T-cell (primary cell): ENCODE measurements at regions of chr9 and their contacts with region 1.

Region 1: GRCh38 chr9:21559424-21560280 is 77.5 kb upstream of the IFNE start:
- DNase-seq: peak; percentile 8 to 66 (median 39)
- ATAC-seq: peak; percentile 81 to 88 (median 84)
- H3K4me3 ChIP-seq: peak overlapping the region; percentile 66 to 90
- H3K4me3 Mint-ChIP-seq: peak overlapping the region; percentile 93 to 97 (median 93)
- H3K27ac ChIP-seq: no peak overlapping the region
- H3K27ac Mint-ChIP-seq: no peak overlapping the region
- H3K4me1 ChIP-seq: peaks cover 4 to 18% of the 10 kb centered on the region in 2 experiments
- H3K4me1 Mint-ChIP-seq: peaks cover 27 to 37% (median 27%) of the 10 kb centered on the region in 3 donors
- H3K27me3 ChIP-seq: peaks cover 16 to 23% of the 10 kb centered on the region in 2 experiments
- H3K27me3 Mint-ChIP-seq: peaks cover 12 to 46% of the 10 kb centered on the region in 2 donors

Region 2: DNA sequence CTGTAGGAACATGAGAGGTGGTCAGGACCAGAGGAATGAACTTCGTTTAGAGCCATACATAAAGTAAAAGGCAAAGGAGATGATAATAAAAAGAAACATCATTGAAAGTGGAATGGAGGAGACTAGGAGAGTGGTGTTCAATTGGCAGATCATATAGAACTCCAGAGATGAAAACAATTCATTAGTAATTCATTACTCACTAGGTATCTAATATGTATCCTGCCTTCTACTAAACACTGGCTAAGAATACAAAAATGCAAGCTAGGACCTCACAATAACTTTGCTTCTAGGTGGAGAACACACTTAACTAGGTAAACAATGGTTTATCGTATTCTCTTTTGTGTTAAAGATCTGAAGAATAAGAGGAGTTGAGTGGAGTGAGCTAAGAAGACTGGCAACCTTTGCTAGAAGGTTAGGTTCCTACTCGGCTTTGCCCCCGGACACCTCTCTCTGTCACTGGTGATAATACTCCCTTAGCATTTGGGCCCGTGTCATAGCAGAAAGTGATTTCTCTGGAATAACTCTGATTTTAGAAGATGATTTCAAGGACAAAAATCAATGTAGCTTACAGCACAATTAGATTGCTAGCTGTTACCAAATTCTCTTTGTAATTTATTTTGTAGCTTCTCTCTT is 11.1 kb after region 1 on chr9:
- CTCF ChIA-PET with region 1: interaction called in 1 of 2 experiments, 5 read pairs
- POLR2A ChIA-PET with region 1: interaction called, 4 to 12 read pairs
- DNase-seq: no peak
- ATAC-seq: no peak
- H3K4me3 ChIP-seq: no peak overlapping the region
- H3K4me3 Mint-ChIP-seq: no peak overlapping the region
- H3K27ac ChIP-seq: no peak overlapping the region
- H3K27ac Mint-ChIP-seq: no peak overlapping the region
- H3K4me1 ChIP-seq: no peaks in the 10 kb centered on the region
- H3K4me1 Mint-ChIP-seq: peaks cover under 1 to 2% (median 2%) of the 10 kb centered on the region in 3 donors
- H3K27me3 ChIP-seq: peaks cover 0 to 4% of the 10 kb centered on the region in 2 experiments
- H3K27me3 Mint-ChIP-seq: peaks cover 0 to 9% of the 10 kb centered on the region in 2 donors